HCT116 (cell line): ENCODE measurements at regions of chr18 and their contacts with region 1.

Region 1: GRCh38 chr18:774811-775210 is 37.2 kb downstream of the YES1 start:
- DNase-seq: no peak
- ATAC-seq: no peak
- H3K4me3 ChIP-seq: no peak overlapping the region
- H3K27ac ChIP-seq: no peak overlapping the region
- H3K4me1 ChIP-seq: peaks cover 0 to 3% of the 10 kb centered on the region in 2 experiments; a peak in 1 of 4 replicates
- H3K27me3 ChIP-seq: no peaks in the 10 kb centered on the region
- CTCF ChIP-seq: no peak
- POLR2A ChIP-seq: no peak
- RAD21 ChIP-seq: no peak

Region 2: DNA sequence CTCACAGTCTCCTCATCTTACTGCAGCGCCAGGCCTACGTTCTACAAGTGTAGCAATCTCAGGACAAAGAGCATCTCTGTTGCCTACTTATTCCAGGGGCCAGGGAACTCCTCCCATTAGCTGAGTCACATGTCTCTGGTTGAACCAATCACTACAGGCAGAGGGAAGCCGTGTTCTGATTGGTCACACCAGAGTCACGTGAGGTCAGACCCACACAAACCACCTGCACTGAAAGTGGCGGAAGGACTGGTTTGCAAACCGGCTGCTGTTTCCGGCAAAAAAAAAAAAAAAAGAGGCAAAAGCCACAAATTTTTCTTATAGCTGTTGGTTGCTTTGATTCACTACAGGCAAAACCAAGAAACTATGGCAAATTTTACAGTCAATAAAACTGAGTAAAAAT is 638.4 kb before region 1 on chr18:
- CTCF ChIA-PET with region 1: no interaction called
- POLR2A ChIA-PET with region 1: no interaction called
- RAD21 ChIA-PET with region 1: no interaction called
- intact Hi-C with region 1: no loop called
- DNase-seq: no peak
- ATAC-seq: no peak
- H3K4me3 ChIP-seq: no peak overlapping the region
- H3K27ac ChIP-seq: no peak overlapping the region
- H3K4me1 ChIP-seq: no peaks in the 10 kb centered on the region
- H3K27me3 ChIP-seq: no peaks in the 10 kb centered on the region
- CTCF ChIP-seq: no peak
- POLR2A ChIP-seq: no peak
- RAD21 ChIP-seq: no peak

Region 3: GRCh38 chr18:789397-789796 is 14.6 kb after region 1 on chr18:
- CTCF ChIA-PET with region 1: interaction called, 3 read pairs
- POLR2A ChIA-PET with region 1: no interaction called
- RAD21 ChIA-PET with region 1: no interaction called
- intact Hi-C with region 1: loop called (anchors 1 kb)
- DNase-seq: no peak
- ATAC-seq: no peak
- H3K4me3 ChIP-seq: no peak overlapping the region
- H3K27ac ChIP-seq: no peak overlapping the region
- H3K4me1 ChIP-seq: no peaks in the 10 kb centered on the region
- H3K27me3 ChIP-seq: no peaks in the 10 kb centered on the region
- CTCF ChIP-seq: no peak
- POLR2A ChIP-seq: no peak
- RAD21 ChIP-seq: no peak